Calu3 (cell line): ENCODE measurements at regions of chr15 and their contacts with region 1.

Region 1: GRCh38 chr15:73081321-73081958 is 29.2 kb downstream of the NEO1 start:
- DNase-seq: peak; percentile 45
- H3K4me3 Mint-ChIP-seq: no peak overlapping the region
- H3K27ac Mint-ChIP-seq: no peak overlapping the region
- H3K4me1 Mint-ChIP-seq: peaks cover 9% of the 10 kb centered on the region
- H3K27me3 Mint-ChIP-seq: no peaks in the 10 kb centered on the region
- CTCF ChIP-seq: peak; percentile 48

Region 2: DNA sequence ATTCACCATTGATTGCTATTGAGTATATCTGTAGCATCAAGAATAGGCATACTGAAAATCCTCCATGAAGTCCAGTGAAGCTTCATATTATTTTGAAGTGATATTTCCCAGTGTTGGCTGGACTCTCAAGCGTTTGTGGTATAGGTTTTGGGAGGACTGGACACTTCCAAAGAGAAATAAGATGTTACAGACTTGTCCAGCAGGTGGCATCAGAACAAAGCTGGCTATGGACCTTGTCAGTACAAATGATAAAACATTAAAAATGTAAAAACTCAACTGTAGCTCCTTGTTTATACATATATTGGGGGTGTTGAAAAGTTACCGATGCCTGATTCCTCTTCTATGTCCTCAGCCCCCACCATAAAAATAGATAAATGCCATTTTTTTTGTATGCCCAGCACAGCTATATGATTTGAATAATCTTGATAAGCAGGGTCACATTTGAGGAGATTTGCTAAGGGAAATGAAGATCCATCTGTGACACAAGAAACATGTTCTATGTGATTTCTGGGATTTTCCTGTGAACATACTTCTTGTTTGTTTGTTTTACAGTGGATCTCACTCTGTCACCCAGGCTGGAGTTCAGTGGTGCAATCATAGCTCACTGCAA is 481.5 kb before region 1 on chr15:
- CTCF ChIA-PET with region 1: no interaction called
- intact Hi-C with region 1: loop called (anchors 5 kb)
- DNase-seq: peak; percentile 56
- H3K4me3 Mint-ChIP-seq: no peak overlapping the region
- H3K27ac Mint-ChIP-seq: no peak overlapping the region
- H3K4me1 Mint-ChIP-seq: no peaks in the 10 kb centered on the region
- H3K27me3 Mint-ChIP-seq: peaks cover 15% of the 10 kb centered on the region
- CTCF ChIP-seq: peak; percentile 24

Region 3: DNA sequence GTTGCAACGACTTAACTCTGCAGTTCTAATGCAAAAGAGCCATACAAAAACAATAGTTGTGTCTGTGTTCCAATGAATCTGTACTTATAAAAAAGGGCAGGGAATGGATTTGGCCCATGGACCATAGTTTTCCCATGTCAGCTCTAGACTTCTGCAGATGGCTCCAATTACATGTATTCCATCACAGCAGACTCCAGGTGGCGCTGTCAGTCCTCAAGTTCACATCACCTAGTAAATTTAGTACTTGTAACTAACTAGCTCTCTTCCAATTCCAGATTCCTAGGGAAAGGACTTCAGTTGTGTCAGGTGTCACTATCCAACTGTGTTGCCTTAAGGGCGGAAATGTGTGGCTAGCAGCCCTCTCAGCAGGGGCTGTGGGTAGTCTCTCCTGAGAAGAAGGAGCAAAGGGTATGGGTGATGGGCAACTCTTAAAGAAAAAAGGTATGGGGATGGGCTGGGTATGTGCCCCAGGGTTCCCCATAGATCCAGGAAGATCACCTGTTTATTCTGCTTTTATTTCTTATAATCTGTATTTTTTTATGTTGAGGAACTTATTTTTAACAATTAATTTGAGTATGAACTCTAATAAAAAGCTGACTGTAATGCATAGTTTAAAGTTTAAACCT is 359.3 kb before region 1 on chr15:
- CTCF ChIA-PET with region 1: interaction called, 12 read pairs
- intact Hi-C with region 1: loop called (anchors 1 kb)
- DNase-seq: peak; percentile 74
- H3K4me3 Mint-ChIP-seq: no peak overlapping the region
- H3K27ac Mint-ChIP-seq: no peak overlapping the region
- H3K4me1 Mint-ChIP-seq: peaks cover 6% of the 10 kb centered on the region
- H3K27me3 Mint-ChIP-seq: no peaks in the 10 kb centered on the region
- CTCF ChIP-seq: peak; percentile 84

Region 4: GRCh38 chr15:72783563-72784237 is 297.7 kb before region 1 on chr15 and contains the start of gene ADPGK:
- CTCF ChIA-PET with region 1: interaction called, 3 read pairs
- intact Hi-C with region 1: loop called (anchors 5 kb)
- DNase-seq: peak; percentile 97
- H3K4me3 Mint-ChIP-seq: peak within 1 kb of the TSS; percentile 87
- H3K27ac Mint-ChIP-seq: peak within 1 kb of the TSS; percentile 92
- H3K4me1 Mint-ChIP-seq: peaks cover 21% of the 10 kb centered on the region
- H3K27me3 Mint-ChIP-seq: peaks cover 7% of the 10 kb centered on the region
- CTCF ChIP-seq: no peak
- total RNA-seq, gene ADPGK: 82.7 and 84.4 TPM in 2 replicates

Region 5: DNA sequence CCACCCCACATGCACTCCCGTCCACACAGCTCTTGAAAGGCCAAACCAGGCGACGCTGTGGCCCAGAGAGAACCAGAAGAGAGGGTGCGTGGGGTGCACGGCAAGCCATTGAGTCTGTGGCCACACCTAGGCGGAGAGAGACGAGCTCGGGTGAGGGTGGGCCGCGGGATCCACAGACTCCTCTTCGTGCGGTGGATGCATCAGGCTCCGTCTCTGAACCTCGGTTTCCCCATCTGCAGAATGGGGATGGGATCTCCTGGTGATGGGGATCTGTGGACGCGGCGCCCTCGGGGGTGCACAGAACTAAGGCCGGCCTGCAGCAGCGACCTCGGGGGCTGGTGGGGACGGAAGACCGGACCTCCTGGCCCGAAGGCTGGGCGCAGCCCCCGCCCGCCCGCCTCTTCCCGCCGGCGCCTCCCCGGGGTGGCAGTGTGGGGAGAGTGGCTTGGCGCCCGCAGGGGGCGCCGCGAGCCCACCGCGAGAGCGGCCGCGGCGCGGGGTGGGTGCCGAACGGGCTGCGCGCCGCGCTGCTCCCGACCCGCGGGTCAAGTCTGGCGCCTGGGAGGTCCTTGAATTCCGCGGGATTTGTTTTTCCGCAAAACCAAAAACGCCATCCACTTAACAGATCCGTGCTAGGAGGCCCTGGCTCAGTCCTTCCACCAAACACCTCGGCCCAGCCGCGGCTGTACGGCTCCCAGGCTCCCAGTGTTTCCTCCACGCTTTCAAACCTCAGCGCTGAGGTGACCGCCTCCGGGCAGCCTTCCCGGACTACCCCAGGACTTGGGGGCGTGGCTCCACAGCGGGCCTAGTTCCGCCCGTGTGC is 284.7 kb before region 1 on chr15:
- CTCF ChIA-PET with region 1: interaction called, 7 read pairs
- intact Hi-C with region 1: loop called (anchors 1 kb)
- DNase-seq: peak; percentile 55
- H3K4me3 Mint-ChIP-seq: peak overlapping the region; percentile 70
- H3K27ac Mint-ChIP-seq: peak overlapping the region; percentile 10
- H3K4me1 Mint-ChIP-seq: peaks cover 12% of the 10 kb centered on the region
- H3K27me3 Mint-ChIP-seq: peaks cover 50% of the 10 kb centered on the region
- CTCF ChIP-seq: peak; percentile 72

Region 6: DNA sequence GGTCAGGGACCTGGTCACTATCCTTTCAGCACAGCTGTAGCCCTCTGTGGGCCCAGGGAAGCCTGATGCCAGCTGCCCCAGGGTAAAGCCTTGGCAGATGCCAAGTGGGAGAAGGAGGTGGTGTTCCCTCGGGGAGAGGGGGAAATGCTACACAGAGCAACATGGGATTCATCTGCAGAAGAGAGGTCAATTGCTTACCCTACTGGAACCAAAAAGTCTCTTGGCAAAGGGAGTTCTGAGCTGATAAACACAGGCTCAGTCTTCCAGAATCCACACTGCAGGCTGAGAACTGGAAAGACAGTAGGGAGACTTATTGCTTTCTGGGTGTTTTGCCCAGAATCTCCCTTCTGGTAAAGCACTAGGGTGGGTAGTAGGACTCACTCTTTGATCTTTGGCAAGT is 129.3 kb before region 1 on chr15:
- CTCF ChIA-PET with region 1: no interaction called
- intact Hi-C with region 1: loop called (anchors 1 kb)
- DNase-seq: no peak
- H3K4me3 Mint-ChIP-seq: no peak overlapping the region
- H3K27ac Mint-ChIP-seq: no peak overlapping the region
- H3K4me1 Mint-ChIP-seq: no peaks in the 10 kb centered on the region
- H3K27me3 Mint-ChIP-seq: peaks cover 38% of the 10 kb centered on the region
- CTCF ChIP-seq: no peak